ENCODE measurements at regions of chr1 and their contacts with region 1.

Region 1: DNA sequence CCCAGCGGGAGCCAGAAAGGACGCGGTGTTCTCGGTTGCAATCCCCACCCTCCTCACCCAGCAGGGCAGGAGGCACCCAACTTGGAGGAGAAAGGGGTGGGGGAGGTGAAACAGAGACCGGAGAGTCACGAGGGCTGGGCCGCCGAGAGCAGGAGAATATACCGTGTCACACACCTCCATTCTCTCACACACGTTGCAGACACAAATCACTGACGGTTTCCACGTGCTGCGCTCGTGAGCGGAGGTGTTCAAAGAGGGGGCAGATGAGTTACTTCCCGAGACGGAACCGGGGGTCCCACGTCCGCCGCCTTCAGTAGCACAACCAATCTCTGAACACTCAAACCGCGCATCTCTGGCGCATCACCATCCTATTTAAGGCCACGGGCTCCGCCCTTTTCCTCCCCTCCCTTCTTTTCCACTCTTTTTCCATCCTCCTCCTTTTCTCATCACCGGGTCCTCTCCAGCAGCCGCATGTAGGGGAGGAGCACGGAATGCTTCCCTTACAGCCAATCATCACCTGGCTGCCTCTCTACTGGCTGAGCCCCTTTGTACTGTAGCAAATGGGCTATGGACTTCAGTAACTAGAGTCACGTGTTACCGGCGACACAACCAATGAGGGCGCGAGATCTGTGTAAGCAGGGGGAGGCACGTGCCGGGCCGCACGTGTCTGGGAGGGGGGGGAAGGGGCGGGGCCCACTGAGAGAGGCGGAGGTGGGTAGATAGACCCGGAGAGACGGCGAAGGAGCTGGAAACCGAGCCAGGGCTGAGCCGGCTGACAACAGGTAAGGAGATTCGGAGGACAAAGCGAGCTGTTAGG is at the start of gene CIART:
- DNase-seq: peak; percentile 98
- H3K4me3 ChIP-seq: peak within 1 kb of the TSS; percentile 57 to 74 (median 68)
- H3K27ac ChIP-seq: peak within 1 kb of the TSS; percentile 86
- H3K4me1 ChIP-seq: peaks cover 24% of the 10 kb centered on the region
- H3K27me3 ChIP-seq: no peaks in the 10 kb centered on the region
- CTCF ChIP-seq: no peak
- total RNA-seq, gene CIART: 8.1 to 13.2 TPM

Region 2: DNA sequence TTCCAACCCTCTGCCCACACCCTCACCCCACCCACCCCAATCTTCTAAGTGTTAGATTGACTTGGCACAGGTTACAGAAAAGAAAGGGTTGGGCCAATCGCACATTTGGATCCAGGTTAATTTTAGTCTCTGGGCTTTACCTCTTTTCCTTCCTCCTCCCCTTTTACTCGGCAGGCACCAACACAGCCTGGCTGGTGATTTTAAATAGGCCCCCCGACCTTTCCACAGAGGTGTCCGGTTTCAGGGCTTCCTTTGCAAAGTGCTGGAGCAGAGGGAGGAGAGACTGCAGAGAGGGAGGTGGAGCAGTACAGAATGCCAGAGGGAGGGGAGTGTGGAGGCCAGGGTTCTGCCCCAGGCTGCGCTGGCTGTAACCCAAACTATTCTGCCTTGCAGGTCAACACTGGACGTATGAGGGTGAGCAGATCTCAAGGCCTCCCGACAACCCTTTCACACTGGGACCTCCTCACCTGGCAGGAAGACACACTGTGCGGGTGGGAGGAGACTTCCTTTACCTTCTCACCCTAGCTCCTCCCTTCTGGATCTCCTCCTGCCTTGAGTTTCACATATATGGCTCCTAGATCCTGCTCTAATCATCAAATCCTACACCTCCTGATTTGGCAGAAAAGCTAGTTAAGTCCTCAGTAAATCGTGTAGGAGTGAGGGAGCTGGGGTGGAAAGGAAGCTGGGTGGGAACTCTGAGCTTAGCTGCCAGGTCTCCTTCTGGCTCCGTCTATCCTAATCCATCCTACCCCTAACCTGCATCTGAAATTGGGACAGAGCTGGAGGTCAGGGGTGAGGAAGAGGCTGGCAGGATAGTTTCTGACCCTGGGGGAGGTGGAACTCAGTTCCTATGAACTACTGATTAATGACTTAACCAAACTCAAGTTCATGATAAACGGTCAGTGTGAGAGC is 22.0 kb before region 1 on chr1:
- CTCF ChIA-PET with region 1: interaction called, 3 read pairs
- dilution Hi-C with region 1: no loop called
- in situ Hi-C with region 1: no loop called
- intact Hi-C with region 1: loop called (anchors 1 kb)
- DNase-seq: peak; percentile 56
- H3K4me3 ChIP-seq: peak overlapping the region in 2 of 3 experiments; percentile 2 to 11
- H3K27ac ChIP-seq: peak overlapping the region; percentile 19
- H3K4me1 ChIP-seq: peaks cover 45% of the 10 kb centered on the region
- H3K27me3 ChIP-seq: no peaks in the 10 kb centered on the region
- CTCF ChIP-seq: no peak

Region 3: DNA sequence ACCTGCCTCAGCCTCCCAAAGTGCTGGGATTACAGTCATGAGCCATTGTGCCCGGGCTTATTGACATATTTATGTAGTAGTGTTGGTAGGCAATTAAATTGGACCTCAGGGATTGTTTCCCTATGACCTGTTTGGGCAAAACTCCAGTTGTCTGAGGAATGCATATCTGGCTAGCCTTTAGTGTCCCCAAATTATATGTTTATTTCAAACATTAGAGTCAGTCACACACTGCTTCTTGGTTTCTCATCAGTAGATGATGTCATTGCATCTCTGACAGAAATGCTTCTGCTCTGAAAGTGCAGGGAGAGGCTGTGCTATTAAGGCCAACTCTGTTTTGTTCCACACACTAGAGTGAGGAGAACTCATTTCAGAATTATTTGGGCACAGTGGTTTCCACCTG is 928.8 kb after region 1 on chr1:
- CTCF ChIA-PET with region 1: no interaction called
- dilution Hi-C with region 1: no loop called
- in situ Hi-C with region 1: no loop called
- intact Hi-C with region 1: no loop called
- DNase-seq: no peak
- H3K4me3 ChIP-seq: no peak overlapping the region
- H3K27ac ChIP-seq: no peak overlapping the region
- H3K4me1 ChIP-seq: peaks cover 4% of the 10 kb centered on the region
- H3K27me3 ChIP-seq: no peaks in the 10 kb centered on the region
- CTCF ChIP-seq: no peak

Measured in mammary epithelial cell (primary cell).